Psoas muscle (tissue), 8 donors: ENCODE measurements at regions of chr4 and their contacts with region 1.

Region 1: GRCh38 chr4:159266981-159267868 is 164.3 kb downstream of the RAPGEF2 start:
- DNase-seq: no peak
- ATAC-seq: peak; percentile 30 to 79 (median 70)
- H3K4me3 ChIP-seq: peak overlapping the region; percentile 38
- H3K27ac ChIP-seq: peak overlapping the region; percentile 57
- H3K4me1 ChIP-seq: peaks cover 49% of the 10 kb centered on the region
- H3K27me3 ChIP-seq: no peaks in the 10 kb centered on the region
- CTCF ChIP-seq: no peak

Region 2: DNA sequence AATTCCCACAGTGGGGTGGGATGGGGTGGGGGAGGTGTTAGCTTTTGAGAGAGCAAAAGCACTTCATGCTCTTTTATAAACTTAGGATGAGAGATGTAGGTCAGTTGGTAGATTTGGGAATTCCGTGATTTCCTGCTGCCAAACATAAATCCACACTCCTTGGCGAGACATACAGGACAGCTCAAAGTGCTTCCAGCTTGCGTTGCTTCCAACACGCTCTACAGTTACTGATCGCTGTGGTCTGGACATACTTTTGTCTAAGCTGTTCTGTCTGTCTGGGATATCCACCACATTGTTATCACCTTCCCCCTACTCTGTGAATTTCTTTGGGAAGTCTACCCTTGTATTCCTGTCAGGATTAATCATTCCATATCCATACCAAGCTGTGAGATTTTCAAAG is 46.9 kb before region 1 on chr4:
- intact Hi-C with region 1: loop called in 1 of 2 experiments (anchors 5 kb)
- DNase-seq: no peak
- ATAC-seq: peak; percentile 62 to 76 (median 74)
- H3K4me3 ChIP-seq: peak overlapping the region; percentile 17
- H3K27ac ChIP-seq: peak overlapping the region; percentile 64
- H3K4me1 ChIP-seq: peaks cover 57% of the 10 kb centered on the region
- H3K27me3 ChIP-seq: no peaks in the 10 kb centered on the region
- CTCF ChIP-seq: no peak